HCT116 (cell line): ENCODE measurements at regions of chr17 and their contacts with region 1.

Region 1: GRCh38 chr17:51203838-51204237 is 37.6 kb downstream of the NME2 start:
- DNase-seq: no peak
- ATAC-seq: no peak
- H3K4me3 ChIP-seq: no peak overlapping the region
- H3K27ac ChIP-seq: no peak overlapping the region
- H3K4me1 ChIP-seq: no peaks in the 10 kb centered on the region
- H3K27me3 ChIP-seq: no peaks in the 10 kb centered on the region
- CTCF ChIP-seq: no peak
- POLR2A ChIP-seq: no peak
- RAD21 ChIP-seq: no peak

Region 2: GRCh38 chr17:51083981-51084380 is 119.9 kb before region 1 on chr17:
- CTCF ChIA-PET with region 1: no interaction called
- POLR2A ChIA-PET with region 1: no interaction called
- RAD21 ChIA-PET with region 1: no interaction called
- intact Hi-C with region 1: loop called (anchors 2 kb)
- DNase-seq: no peak
- ATAC-seq: no peak
- H3K4me3 ChIP-seq: no peak overlapping the region
- H3K27ac ChIP-seq: no peak overlapping the region
- H3K4me1 ChIP-seq: peaks cover 2 to 29% of the 10 kb centered on the region in 2 experiments; a peak in 2 of 4 replicates
- H3K27me3 ChIP-seq: no peaks in the 10 kb centered on the region
- CTCF ChIP-seq: no peak
- POLR2A ChIP-seq: no peak
- RAD21 ChIP-seq: no peak

Region 3: GRCh38 chr17:51472670-51473205 is 268.9 kb after region 1 on chr17:
- CTCF ChIA-PET with region 1: no interaction called
- POLR2A ChIA-PET with region 1: no interaction called
- RAD21 ChIA-PET with region 1: no interaction called
- intact Hi-C with region 1: no loop called
- DNase-seq: no peak
- ATAC-seq: no peak
- H3K4me3 ChIP-seq: no peak overlapping the region
- H3K27ac ChIP-seq: no peak overlapping the region
- H3K4me1 ChIP-seq: no peaks in the 10 kb centered on the region
- H3K27me3 ChIP-seq: peaks cover 77% of the 10 kb centered on the region
- CTCF ChIP-seq: no peak
- POLR2A ChIP-seq: no peak
- RAD21 ChIP-seq: no peak